GM10248 (cell line): ENCODE measurements at regions of chr14 and their contacts with region 1.

Region 1: GRCh38 chr14:22143363-22143762 is 445.7 kb downstream of the DAD1 start:
- DNase-seq: no peak
- CTCF ChIP-seq: no peak

Region 2: DNA sequence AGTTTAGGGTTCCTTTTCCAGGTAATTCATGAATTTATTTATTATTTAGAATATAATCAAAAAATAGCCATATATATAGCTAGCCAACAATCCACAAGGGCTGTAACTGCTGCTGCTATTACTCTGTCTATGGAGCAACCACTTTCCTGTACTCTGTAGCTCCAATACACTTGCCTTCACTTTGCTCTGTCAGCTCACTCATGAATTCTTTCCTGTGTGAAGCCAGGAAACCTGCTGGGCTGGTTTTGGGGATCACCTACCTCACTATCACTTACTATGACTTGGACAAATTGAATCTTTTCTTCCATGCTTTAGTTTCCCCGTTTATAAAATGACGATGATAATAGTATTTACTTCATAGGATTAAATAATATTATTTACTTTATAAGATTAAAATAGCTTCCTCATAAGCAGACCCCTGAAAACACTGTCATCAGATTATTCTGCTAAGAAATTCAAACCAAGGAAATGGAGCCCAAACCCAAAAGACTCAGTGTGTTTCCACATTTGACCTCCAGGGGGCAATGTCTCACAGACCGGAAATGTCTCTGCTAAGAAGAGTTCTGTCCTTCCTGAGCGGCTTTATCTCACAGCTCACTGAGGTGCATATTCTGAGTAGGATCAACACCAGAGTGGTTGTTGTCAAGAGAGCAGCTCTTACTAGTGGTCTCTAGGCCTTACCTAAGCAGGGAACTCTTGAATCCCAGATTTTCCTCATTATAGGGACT is 11.4 kb before region 1 on chr14:
- CTCF ChIA-PET with region 1: interaction called, 20 read pairs
- POLR2A ChIA-PET with region 1: no interaction called
- DNase-seq: no peak
- CTCF ChIP-seq: peak; percentile 24

Region 3: DNA sequence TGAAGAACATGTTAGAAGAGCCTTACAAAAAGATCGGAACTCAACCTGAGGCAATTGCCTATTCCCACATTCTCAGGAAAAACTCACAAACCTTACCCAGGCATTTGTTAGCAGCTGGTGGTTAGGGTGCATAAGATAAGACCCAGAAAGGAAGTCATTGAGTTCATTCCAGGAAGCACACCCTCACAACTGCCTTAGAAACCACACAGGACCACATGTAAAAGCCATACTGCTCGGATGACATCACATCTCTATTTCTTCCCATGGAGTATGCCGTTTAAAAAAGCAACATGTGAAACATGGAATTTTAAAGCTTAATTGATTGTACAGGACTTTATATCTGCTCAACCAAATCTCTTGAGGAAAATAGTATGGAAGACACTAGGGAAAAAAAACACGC is 34.5 kb after region 1 on chr14:
- CTCF ChIA-PET with region 1: no interaction called
- POLR2A ChIA-PET with region 1: no interaction called
- DNase-seq: no peak
- CTCF ChIP-seq: no peak